ENCODE measurements at regions of chr16 and their contacts with region 1.

Region 1: DNA sequence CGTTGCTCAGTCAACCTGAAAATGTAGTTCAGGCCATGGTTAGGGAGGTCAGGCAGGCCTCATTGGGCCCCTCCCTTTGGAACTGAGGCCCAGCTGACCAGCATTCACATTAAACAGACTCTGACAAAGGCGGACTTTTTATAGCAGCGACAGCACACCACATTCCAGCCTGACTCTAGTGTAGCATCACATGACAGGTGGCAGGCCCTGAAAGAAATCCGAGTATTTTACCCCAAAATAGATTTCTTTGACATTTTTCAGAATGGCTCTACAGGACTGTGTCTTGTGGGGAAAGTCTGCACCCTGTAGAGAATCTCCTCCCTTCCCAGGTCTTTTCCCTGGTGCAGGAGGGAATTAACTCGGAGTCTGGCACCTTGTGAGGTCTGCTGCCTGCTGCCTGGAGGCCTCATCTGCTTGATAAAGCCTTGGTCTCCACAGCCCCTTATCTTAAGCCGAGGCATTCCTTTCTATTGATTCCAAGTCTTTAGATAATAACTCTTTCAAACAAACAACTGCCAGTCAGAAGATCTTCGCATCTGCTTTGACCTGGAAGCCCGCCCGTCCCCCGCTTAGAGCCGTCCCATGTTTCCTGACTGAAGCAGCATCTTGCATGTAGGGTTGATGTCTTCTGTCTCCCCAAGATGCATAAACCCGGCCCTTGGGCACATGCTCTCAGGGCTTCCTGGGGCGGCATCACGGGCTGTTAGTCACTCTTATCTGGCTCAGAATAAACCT is 44.0 kb upstream of the CAPN15 start:
- DNase-seq: no peak
- H3K4me3 Mint-ChIP-seq: no peak overlapping the region
- H3K27ac Mint-ChIP-seq: no peak overlapping the region
- H3K4me1 Mint-ChIP-seq: no peaks in the 10 kb centered on the region
- H3K27me3 Mint-ChIP-seq: no peaks in the 10 kb centered on the region

Region 2: DNA sequence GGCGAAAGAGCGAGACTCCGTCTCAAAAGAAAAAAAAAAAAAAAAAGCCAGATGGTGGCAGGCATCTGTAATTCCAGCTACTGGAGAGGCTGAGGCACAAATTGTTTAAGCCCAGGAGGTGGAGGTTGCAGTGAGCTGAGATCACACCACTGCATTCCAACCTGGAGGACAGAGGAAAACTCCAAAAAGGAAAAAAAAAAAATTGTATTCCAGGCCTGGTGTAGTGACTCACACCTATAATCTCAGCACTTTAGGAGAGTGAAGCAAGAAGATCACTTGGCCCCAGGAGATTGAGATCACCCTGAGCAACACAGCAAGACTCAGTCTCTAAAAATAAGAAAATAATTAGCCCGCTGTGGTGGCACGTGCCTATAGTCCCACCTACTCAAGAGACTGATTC is 283.1 kb before region 1 on chr16:
- intact Hi-C with region 1: no loop called
- DNase-seq: no peak
- H3K4me3 Mint-ChIP-seq: no peak overlapping the region
- H3K27ac Mint-ChIP-seq: no peak overlapping the region
- H3K4me1 Mint-ChIP-seq: no peaks in the 10 kb centered on the region
- H3K27me3 Mint-ChIP-seq: no peaks in the 10 kb centered on the region

Region 3: DNA sequence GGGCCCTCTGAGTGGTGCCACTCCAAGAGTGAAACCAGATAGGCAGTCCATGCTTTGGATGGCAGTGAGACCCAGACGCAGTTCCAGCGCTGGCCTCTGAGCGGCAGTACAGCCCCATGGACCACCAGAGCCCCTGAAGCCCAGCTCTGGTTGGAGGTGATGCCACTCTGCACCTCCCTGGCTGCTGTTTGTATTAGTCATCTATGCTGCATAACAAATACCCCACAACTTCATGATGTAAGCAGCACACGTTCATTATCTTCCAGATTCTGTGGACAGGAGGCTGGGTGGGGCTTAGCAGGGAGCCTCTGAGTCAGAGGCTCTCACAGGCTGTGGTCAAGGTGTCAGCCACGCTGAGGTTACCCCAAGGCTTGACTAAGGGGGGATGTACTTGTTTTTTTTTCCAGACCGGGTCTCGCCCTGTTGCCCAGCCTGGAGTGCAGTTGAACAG is 91.6 kb before region 1 on chr16:
- intact Hi-C with region 1: loop called (anchors 1 kb)
- DNase-seq: peak; percentile 56
- H3K4me3 Mint-ChIP-seq: no peak overlapping the region
- H3K27ac Mint-ChIP-seq: no peak overlapping the region
- H3K4me1 Mint-ChIP-seq: peaks cover 4% of the 10 kb centered on the region
- H3K27me3 Mint-ChIP-seq: peaks cover 8% of the 10 kb centered on the region

Region 4: GRCh38 chr16:468068-468821 is 15.3 kb before region 1 on chr16:
- intact Hi-C with region 1: no loop called
- DNase-seq: no peak
- H3K4me3 Mint-ChIP-seq: no peak overlapping the region
- H3K27ac Mint-ChIP-seq: no peak overlapping the region
- H3K4me1 Mint-ChIP-seq: no peaks in the 10 kb centered on the region
- H3K27me3 Mint-ChIP-seq: no peaks in the 10 kb centered on the region